ENCODE measurements at regions of chr1 and their contacts with region 1.

Region 1: GRCh38 chr1:34460193-34460592 is 283.5 kb downstream of the C1orf94 start:
- DNase-seq: peak; percentile 23 to 85
- H3K4me3 ChIP-seq: no peak overlapping the region
- H3K27ac ChIP-seq: no peak overlapping the region
- H3K4me1 ChIP-seq: no peaks in the 10 kb centered on the region
- H3K27me3 ChIP-seq: no peaks in the 10 kb centered on the region
- CTCF ChIP-seq: peak; percentile 71 to 85 (median 85)
- EP300 ChIP-seq: no peak
- POLR2A ChIP-seq: no peak
- RAD21 ChIP-seq: peak; percentile 80 to 85

Region 2: GRCh38 chr1:34268311-34268954 is 191.8 kb before region 1 on chr1:
- CTCF ChIA-PET with region 1: no interaction called
- POLR2A ChIA-PET with region 1: no interaction called
- DNase-seq: peak in 1 of 2 experiments; percentile 22
- H3K4me3 ChIP-seq: no peak overlapping the region
- H3K27ac ChIP-seq: no peak overlapping the region
- H3K4me1 ChIP-seq: peaks cover 0 to 5% (median 3%) of the 10 kb centered on the region in 4 experiments; a peak in 5 of 7 replicates
- H3K27me3 ChIP-seq: peaks cover 0 to 3% (median under 1%) of the 10 kb centered on the region in 4 experiments; a peak in 3 of 7 replicates
- CTCF ChIP-seq: no peak
- EP300 ChIP-seq: no peak
- POLR2A ChIP-seq: no peak
- RAD21 ChIP-seq: no peak

Region 3: GRCh38 chr1:34433099-34433498 is 27.1 kb before region 1 on chr1:
- CTCF ChIA-PET with region 1: interaction called, 11 read pairs
- POLR2A ChIA-PET with region 1: no interaction called
- DNase-seq: no peak
- H3K4me3 ChIP-seq: no peak overlapping the region
- H3K27ac ChIP-seq: no peak overlapping the region
- H3K4me1 ChIP-seq: no peaks in the 10 kb centered on the region
- H3K27me3 ChIP-seq: no peaks in the 10 kb centered on the region
- CTCF ChIP-seq: no peak
- EP300 ChIP-seq: no peak
- POLR2A ChIP-seq: no peak
- RAD21 ChIP-seq: no peak

Region 4: DNA sequence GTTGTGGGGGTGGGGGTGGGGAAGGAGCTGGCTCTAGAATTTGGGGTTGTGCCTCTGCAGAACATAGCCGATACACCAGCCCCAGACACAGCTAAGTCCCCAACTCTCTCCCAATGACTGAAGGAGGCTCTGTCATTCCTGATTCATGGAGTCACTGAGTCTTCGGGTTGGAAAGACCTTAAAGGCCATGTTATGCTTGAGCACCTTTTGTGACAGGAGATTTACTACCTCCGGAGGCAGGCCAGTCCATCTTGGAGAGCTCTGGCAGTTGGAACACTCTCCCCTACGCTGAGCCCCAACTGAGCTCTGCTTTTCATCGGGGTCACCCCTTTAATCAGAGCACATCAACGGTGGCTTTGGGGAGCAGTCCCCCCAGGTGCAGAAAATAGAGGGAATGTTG is 10.2 kb after region 1 on chr1:
- CTCF ChIA-PET with region 1: interaction called, 10 read pairs
- POLR2A ChIA-PET with region 1: no interaction called
- DNase-seq: no peak
- H3K4me3 ChIP-seq: no peak overlapping the region
- H3K27ac ChIP-seq: no peak overlapping the region
- H3K4me1 ChIP-seq: peaks cover 0 to 6% (median 4%) of the 10 kb centered on the region in 4 experiments; a peak in 5 of 7 replicates
- H3K27me3 ChIP-seq: peaks cover 0 to 1% (median 0%) of the 10 kb centered on the region in 4 experiments; a peak in 1 of 7 replicates
- CTCF ChIP-seq: no peak
- EP300 ChIP-seq: no peak
- POLR2A ChIP-seq: no peak
- RAD21 ChIP-seq: no peak

Region 5: GRCh38 chr1:34479731-34480130 is 19.5 kb after region 1 on chr1:
- CTCF ChIA-PET with region 1: interaction called, 12 read pairs
- POLR2A ChIA-PET with region 1: interaction called, 3 read pairs
- DNase-seq: no peak
- H3K4me3 ChIP-seq: no peak overlapping the region
- H3K27ac ChIP-seq: no peak overlapping the region
- H3K4me1 ChIP-seq: peaks cover 0 to 6% (median 0%) of the 10 kb centered on the region in 4 experiments; a peak in 1 of 7 replicates
- H3K27me3 ChIP-seq: no peaks in the 10 kb centered on the region
- CTCF ChIP-seq: no peak
- EP300 ChIP-seq: no peak
- POLR2A ChIP-seq: no peak
- RAD21 ChIP-seq: no peak